Activated naive CD4-positive, alpha-beta T cell treated with anti-CD3 and anti-CD28 coated beads for 36 hours (primary cell): ENCODE measurements at regions of chr11 and their contacts with region 1.

Region 1: DNA sequence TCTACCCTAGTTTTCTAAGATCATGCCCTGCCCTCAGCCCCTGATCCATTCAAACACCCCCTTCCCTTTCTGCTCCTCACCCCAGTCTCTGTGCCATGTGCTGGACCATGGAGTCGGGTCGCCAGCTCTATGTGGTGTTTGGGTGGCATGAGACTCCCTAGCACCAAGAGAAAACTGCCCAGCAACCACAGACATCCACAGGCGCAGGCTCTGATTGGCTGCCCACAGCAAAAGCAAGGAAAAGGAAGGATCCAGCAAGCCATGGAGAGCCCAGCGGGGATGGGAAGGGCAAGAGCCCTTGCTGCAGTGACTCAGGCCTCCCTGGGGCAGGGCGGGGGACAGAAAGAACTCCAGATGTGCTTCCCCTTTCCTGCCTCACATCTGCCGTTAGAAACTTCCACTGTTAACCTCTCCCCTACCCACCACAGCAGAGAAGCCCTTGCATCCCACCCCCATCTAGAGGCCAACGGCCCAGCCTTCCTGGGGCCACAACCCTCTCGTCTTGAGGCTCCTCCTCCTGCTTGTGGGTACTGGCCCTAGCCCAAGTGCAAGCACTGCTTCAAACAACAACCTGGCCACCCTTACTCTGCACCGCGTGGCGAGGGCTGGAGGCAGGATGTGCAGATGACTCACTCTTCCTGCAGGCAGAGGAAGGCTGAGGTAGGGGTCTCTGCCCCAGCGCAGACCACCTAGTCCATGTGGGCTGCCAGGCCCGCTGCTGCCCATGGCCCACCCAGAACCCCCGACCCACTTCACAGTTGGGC is 9.7 kb upstream of the AHNAK start:
- DNase-seq: peak; percentile 93
- H3K4me3 Mint-ChIP-seq: peak overlapping the region; percentile 41
- H3K27ac Mint-ChIP-seq: peak overlapping the region; percentile 96
- H3K4me1 Mint-ChIP-seq: peaks cover 95% of the 10 kb centered on the region
- H3K27me3 Mint-ChIP-seq: no peaks in the 10 kb centered on the region

Region 2: GRCh38 chr11:62044639-62045121 is 511.6 kb before region 1 on chr11:
- CTCF ChIA-PET with region 1: no interaction called
- intact Hi-C with region 1: no loop called
- DNase-seq: no peak
- H3K4me3 Mint-ChIP-seq: no peak overlapping the region
- H3K27ac Mint-ChIP-seq: no peak overlapping the region
- H3K4me1 Mint-ChIP-seq: no peaks in the 10 kb centered on the region
- H3K27me3 Mint-ChIP-seq: no peaks in the 10 kb centered on the region

Region 3: DNA sequence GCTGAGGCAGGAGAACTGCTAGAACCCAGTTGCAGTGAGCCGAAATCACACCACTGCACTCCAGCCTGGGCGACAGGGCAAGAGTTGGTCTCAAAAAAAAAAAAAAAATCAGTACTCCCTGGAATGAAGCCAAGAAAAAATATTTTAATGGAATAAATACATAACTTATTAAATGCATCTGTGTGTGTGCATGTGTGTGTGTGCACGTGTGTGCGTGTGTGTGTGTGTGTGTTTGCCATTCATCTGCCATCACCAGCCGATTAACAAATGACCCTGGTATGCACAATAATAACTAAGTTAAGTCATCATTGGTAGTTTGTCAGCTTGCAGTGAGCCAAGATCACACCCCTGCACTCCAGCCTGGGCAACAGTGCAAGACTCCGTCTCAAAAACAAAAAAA is 172.5 kb before region 1 on chr11:
- CTCF ChIA-PET with region 1: no interaction called
- intact Hi-C with region 1: loop called (anchors 5 kb)
- DNase-seq: no peak
- H3K4me3 Mint-ChIP-seq: no peak overlapping the region
- H3K27ac Mint-ChIP-seq: no peak overlapping the region
- H3K4me1 Mint-ChIP-seq: peaks cover 11% of the 10 kb centered on the region
- H3K27me3 Mint-ChIP-seq: no peaks in the 10 kb centered on the region

Region 4: GRCh38 chr11:62427630-62428233 is 128.6 kb before region 1 on chr11:
- CTCF ChIA-PET with region 1: interaction called, 31 read pairs
- intact Hi-C with region 1: loop called (anchors 1 kb)
- DNase-seq: peak; percentile 28
- H3K4me3 Mint-ChIP-seq: peak overlapping the region; percentile 0
- H3K27ac Mint-ChIP-seq: peak overlapping the region; percentile 54
- H3K4me1 Mint-ChIP-seq: peaks cover 28% of the 10 kb centered on the region
- H3K27me3 Mint-ChIP-seq: no peaks in the 10 kb centered on the region

Region 5: DNA sequence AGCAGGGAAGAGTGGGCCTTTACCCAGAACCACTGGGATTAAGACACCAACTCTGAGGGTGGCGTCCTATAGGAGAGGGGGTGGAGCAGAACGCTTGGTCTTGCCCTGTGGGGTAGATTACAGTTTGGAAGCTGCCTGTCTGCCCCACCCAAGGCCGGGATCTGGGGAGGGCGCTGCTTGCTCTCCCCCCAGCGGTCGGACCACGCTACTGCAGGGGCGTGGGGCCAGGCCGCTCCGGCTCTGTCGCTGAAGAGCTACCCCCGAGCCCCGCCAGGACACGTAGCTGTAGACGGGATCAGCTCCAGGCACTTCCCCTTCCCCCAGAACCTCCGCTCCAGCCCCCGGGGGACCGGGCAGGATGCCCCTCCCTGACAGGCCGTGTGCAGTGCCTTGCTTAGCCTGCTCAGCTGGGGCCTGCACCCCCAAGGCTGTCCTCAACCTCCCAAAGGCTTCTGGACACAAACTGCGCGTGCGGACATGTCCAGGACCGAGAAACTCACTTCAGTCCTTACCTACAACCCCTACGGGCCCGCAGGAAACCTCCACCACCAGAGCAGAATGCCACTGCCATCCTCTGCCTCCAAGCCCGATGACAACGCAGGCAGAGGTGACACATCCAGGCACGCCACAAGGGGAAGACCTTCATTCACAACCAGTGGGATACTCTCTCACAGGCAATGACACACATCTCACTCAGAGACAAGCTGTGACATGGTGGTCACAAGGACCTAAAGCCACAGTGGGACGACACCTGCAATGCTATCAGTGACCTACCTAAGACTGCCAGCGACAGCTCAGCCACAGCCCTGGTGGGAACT is 13.3 kb before region 1 on chr11:
- CTCF ChIA-PET with region 1: interaction called, 61 read pairs
- intact Hi-C with region 1: loop called (anchors 1 kb)
- DNase-seq: peak; percentile 78
- H3K4me3 Mint-ChIP-seq: peak overlapping the region; percentile 32
- H3K27ac Mint-ChIP-seq: no peak overlapping the region
- H3K4me1 Mint-ChIP-seq: peaks cover 70% of the 10 kb centered on the region
- H3K27me3 Mint-ChIP-seq: peaks cover 4% of the 10 kb centered on the region

Region 6: DNA sequence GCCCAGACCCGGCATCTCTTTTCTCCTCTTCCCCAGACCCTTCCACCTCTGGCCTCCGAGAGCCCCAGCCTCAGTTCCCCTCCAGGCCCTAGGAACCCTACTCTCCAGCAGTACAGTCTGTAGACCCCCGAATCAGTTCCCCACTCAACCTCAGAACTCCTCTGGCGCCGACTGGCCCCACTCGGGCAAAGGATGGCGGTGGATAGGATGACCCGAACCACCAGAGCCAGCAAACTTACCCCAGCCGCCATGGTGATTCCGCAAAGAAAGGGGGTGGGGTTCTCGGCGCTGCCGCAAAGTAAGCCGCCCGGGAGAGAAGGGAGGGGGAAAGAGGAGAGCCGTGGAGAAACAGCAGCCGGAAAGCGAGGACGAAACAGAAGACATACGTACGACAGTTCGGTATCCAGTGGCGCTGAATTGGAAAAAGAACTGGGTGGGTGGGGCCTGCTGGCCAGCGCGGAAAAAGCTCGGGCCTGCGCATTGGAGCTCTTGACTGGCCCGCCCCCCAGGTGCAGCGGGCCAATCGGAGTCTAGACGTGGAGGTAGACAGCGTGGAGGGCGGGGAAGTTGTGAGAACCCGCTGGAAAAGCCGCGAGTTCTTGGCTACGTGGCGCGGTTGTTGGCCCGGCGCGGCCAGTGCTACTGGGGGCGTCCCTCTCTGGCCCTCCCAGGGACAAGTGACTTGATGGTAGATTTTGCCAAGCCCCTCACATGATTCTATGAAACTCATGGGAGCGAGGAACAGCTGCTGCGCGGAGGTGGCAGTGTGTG is 17.5 kb after region 1 on chr11 and contains the start of gene EEF1G:
- CTCF ChIA-PET with region 1: interaction called, 10 read pairs
- intact Hi-C with region 1: loop called (anchors 1 kb)
- DNase-seq: peak; percentile 99
- H3K4me3 Mint-ChIP-seq: peak within 1 kb of the TSS; percentile 95
- H3K27ac Mint-ChIP-seq: peak within 1 kb of the TSS; percentile 97
- H3K4me1 Mint-ChIP-seq: peaks cover 44% of the 10 kb centered on the region
- H3K27me3 Mint-ChIP-seq: no peaks in the 10 kb centered on the region
- total RNA-seq, gene EEF1G: 2,282 to 2,440 TPM

Region 7: DNA sequence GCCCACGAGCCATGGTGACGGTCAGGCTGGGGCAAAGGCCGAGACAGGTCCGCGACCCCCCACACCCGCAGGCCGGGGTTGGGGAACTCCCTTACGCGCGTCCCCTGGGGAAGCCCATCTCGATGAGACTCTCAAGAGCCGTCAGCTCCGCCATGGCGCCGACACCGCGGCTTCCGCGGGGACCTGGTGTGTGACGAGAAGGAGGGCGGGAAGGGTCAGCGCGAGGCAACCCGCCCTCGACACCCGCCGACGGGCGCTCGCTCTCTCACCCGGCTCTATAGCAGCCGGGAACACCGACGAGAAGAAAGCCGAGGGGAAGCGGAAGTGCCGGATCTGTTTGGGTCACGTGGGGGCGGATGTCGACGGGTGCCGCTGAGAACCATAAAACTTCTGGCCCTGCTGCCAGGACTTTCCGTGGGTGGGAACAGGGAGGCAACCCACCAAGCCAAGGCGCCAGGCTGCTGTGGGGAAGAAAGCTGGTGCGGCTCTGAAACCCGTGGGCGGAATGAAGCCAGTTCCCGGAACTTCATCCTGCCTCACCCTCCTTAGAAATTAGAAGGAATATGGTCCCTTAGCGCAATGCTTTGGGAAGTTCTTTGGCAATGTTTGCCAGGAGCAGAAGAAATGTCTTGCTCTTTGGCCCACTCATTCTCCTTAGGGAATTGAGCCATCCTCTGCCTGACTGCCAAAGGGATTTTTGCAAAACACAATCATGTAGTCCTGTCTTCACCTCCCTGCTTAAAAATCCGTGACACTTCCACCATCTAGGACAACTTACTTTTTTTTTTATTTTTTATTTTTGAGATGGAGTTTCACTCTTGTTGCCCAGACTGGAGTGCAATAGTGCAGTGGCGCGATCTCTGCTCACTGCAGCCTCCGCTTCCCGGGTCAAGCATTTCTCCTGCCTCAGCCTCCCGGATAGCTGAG is 122.7 kb after region 1 on chr11 and contains the start of gene UBXN1:
- CTCF ChIA-PET with region 1: no interaction called
- intact Hi-C with region 1: no loop called
- DNase-seq: peak; percentile 91
- H3K4me3 Mint-ChIP-seq: peak within 1 kb of the TSS; percentile 87
- H3K27ac Mint-ChIP-seq: peak within 1 kb of the TSS; percentile 94
- H3K4me1 Mint-ChIP-seq: peaks cover 32% of the 10 kb centered on the region
- H3K27me3 Mint-ChIP-seq: no peaks in the 10 kb centered on the region
- total RNA-seq, gene UBXN1: 121 to 124 TPM

Region 8: DNA sequence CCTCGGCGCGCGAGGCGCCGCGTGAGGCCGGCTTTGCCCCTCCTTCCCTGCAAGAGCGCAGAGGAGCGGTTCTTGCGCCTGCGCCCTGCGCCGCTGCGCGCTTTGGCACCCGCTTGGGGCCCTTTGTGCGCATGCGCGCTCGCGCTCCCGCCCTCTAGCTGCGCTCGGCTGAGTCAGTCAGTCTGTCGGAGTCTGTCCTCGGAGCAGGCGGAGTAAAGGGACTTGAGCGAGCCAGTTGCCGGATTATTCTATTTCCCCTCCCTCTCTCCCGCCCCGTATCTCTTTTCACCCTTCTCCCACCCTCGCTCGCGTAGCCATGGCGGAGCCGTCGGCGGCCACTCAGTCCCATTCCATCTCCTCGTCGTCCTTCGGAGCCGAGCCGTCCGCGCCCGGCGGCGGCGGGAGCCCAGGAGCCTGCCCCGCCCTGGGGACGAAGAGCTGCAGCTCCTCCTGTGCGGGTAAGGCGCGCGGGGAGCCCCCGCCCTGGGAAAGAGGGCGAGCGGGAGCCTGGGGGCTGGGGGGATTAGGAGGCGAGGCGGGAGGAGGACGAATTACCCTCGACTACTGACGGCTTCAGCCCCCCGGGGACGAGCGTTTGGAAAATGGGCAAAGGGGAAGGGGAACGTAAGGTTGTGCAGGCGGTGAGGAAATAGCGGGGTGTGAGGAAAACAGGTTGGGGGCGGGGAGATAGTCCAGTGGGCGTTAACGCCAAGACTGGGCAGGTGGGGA is 1125.2 kb after region 1 on chr11 and contains the start of gene RTN3:
- CTCF ChIA-PET with region 1: no interaction called
- intact Hi-C with region 1: loop called (anchors 10 kb)
- DNase-seq: peak; percentile 98
- H3K4me3 Mint-ChIP-seq: peak within 1 kb of the TSS; percentile 91
- H3K27ac Mint-ChIP-seq: peak within 1 kb of the TSS; percentile 86
- H3K4me1 Mint-ChIP-seq: peaks cover 22% of the 10 kb centered on the region
- H3K27me3 Mint-ChIP-seq: no peaks in the 10 kb centered on the region
- total RNA-seq, gene RTN3: 46.7 to 47.6 TPM